ENCODE measurements at regions of chr9 and their contacts with region 1.

Region 1: DNA sequence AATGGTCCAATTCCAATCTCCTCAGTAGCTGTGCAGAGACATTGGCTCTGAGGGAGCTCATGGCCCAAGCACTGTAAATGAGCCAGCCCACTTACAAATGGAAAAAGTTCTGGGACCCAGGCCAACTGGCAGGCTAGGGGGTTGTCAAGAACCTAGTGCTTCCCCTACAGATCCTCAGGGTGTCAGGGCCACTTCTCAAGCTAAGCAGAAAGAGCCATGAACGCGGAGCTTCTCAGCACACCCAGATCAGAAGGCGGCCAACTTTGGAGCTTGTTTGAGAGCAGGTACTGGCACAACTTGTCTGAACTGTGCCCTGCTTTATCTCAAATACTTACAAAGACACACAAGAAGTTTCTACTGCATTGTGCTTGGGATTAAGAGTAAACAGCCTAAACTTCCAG is 17.5 kb downstream of the TLE1 start:
- DNase-seq: peak; percentile 90
- ATAC-seq: peak; percentile 99

Region 2: DNA sequence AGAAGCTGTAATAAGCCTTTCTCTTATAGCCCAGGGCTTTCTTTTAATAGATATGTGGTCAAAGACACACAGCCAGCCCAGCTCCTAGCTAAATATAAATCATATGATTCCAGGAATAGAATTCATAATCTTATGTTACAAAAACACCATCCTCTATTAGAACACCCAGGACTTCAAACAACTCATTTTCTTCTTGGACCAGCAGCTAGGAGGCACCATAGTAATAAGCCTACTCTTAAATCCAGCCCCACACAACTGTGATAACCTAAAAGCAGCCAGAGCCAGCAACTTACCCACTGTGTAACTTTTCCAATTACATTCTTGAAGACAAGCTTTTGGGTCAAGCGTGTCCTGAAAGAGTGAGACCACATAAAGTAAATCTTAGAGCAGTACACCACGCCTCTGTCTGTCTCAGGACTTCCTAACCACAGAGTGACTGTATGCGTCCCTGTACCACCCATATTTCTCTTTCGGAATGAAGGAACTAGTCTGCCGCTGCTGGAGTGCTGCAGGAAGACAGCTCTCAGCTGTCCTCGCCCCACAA is 206.3 kb before region 1 on chr9:
- intact Hi-C with region 1: loop called (anchors 5 kb)
- DNase-seq: no peak
- ATAC-seq: peak; percentile 65

Region 3: DNA sequence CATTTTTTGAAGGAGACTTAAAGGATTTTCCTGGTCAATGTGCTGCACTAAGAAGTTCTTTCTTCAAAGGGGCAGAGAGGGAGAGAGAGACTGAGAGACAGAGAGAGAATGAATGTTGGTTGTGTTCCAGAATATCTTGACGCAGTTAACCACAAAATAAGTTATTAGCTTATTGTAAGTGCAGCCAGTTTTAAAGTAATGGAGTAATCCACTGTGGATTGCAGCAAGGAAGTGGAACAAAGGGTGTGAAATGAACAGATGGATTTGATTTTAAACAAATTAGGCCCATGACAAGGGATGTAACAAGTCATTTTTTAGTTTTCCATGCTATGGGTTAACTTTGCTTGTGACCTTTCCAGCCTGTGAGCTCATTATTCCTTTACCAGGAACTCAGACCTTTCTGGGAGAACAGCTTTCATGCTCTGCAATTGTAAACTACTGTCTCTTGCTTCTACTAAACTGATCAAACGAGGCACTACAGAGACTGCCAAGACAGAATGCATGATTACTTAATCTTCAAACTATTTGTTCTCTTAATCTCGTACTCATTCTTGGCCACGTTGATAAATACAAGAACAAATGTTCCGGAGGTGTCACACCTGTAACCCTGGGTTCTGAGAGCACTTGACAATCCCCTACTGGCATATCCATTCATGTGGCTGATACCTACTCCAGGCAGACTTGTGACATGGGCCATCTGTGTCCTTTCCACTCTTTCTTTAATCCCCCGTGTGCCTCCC is 113.6 kb before region 1 on chr9:
- intact Hi-C with region 1: no loop called
- DNase-seq: no peak
- ATAC-seq: peak; percentile 83

Region 4: DNA sequence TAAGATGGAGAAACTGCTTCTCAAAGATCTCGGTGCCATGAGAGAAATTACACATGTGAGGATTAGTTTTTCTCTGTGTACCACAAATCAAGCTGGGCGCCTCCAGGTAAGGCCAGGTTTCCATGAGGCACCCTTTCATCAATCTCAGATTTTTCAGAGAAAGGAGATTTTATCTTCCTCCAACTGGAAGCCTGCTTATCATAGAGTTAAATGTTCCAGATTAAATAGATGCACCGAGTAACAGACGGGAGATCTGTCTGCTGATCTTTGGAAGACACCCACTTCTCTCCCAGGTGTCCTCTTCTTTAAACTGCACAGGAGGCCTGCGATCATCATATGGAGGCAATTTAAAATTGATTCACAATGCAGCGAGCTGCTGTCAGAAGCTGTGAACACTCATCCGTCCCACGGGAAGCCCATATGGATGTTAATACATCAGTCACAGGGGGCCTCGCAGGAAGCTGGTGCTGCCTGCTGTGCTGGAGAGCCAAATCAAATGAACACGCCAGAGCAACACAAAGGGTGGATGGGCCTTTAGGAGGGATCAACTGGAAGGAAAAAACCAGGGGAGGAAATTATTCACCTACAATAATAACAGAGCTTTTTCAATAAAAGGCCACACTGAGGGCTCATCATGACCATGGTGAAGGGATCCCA is 75.9 kb before region 1 on chr9:
- intact Hi-C with region 1: loop called (anchors 5 kb)
- DNase-seq: no peak
- ATAC-seq: no peak

Measured in Right ventricle myocardium inferior (tissue), 1 donor.